ENCODE measurements at regions of chr7 and their contacts with region 1.

Region 1: DNA sequence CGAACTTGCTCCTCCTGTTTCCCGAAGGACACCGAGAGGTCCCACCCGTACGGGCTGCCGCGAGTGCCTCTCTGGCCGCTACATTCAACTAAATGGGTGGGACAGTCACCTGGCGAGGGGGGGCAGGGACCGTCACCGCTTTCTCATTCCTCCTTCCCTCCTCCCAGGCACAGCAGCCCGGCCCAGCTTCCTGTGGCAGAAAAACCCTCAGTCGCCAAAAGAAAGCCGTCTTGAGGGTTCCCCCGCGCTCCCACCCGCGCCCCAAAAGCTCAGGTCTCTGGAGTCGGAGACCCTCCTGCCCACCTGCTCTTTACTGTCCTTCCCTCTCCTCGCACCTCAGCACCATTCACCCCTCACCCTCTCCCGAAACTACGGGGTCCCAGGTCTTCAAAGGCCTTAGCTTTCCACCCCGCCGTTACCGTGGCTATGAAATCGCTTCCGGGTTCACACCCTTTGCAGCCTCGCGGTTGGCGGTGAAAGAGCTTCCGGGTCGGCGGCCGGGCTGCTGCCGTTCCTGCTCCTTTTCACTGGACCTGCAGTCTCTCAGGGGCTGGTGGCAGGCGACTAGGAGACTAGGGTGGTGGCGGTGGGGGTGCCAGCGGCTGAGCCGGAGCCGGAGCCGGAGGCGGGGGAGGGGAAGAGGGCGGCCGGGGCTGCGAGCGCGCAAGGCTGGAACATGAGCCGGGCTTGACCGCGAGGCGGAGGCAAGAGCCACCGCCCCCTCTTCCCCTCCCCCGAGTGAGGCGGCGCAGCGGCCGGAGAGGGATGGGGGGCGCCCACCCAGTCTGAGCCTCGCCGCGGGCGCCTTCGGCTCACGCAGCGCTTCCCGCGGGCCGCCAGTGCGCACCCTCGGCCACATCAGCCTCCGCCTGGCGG is at the starts of genes ANKIB1 and KRIT1:
- DNase-seq: peak; percentile 76 to 90
- H3K4me3 ChIP-seq: peak within 1 kb of the TSS; percentile 84
- H3K27ac ChIP-seq: peak within 1 kb of the TSS; percentile 83
- H3K4me1 ChIP-seq: peaks cover 31% of the 10 kb centered on the region
- H3K27me3 ChIP-seq: no peaks in the 10 kb centered on the region
- CTCF ChIP-seq: no peak
- total RNA-seq, gene ANKIB1: 78.2 and 116 TPM in 2 replicates
- total RNA-seq, gene KRIT1: 46.6 and 52.6 TPM in 2 replicates

Region 2: DNA sequence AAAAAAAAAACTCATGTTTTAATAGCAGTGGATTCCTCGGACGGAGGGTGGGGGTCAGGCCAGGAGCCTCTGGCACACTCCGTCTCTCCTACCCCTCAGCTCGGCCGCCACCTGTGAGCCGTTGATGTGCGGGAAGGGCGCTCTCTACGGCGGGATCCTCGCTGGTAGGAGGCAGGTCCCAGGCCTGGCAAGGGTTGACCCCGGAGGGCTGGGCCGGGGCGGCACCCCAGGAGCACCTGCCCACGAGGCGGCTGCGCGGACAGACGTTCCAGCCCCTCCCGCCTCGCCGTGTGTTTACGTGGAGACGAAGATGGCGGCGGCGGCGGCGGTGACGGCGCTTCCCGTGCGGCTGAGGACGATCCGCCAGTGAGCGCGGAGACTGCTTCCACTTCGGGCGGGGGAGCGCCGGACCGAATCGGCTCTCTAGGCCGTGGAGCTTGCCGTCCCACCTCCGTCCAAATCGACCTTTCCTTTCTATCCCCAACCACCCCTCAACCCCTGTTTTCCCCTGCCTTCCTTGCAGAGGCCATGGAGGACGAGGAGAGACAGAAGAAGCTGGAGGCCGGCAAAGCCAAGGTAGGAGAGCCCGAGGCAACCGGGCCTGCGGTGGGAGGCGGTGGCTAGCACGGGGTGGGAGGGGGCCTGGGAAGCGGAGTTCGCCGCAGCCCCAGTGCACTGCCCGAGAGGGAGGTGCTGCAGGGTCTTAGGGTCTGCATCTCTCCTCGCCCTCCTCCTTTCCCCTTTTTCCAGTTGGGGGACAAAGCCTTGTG is 305.0 kb before region 1 on chr7 and contains the start of gene AKAP9:
- CTCF ChIA-PET with region 1: no interaction called
- POLR2A ChIA-PET with region 1: interaction called, 15 read pairs
- intact Hi-C with region 1: no loop called
- DNase-seq: peak; percentile 81 to 94
- H3K4me3 ChIP-seq: peak within 1 kb of the TSS; percentile 70
- H3K27ac ChIP-seq: peak within 1 kb of the TSS; percentile 78
- H3K4me1 ChIP-seq: peaks cover 30% of the 10 kb centered on the region
- H3K27me3 ChIP-seq: no peaks in the 10 kb centered on the region
- CTCF ChIP-seq: no peak
- total RNA-seq, gene AKAP9: 48.0 and 71.3 TPM in 2 replicates

Region 3: GRCh38 chr7:91995391-91996105 is 250.2 kb before region 1 on chr7:
- CTCF ChIA-PET with region 1: no interaction called
- POLR2A ChIA-PET with region 1: interaction called, 11 read pairs
- intact Hi-C with region 1: no loop called
- DNase-seq: no peak
- H3K4me3 ChIP-seq: no peak overlapping the region
- H3K27ac ChIP-seq: no peak overlapping the region
- H3K4me1 ChIP-seq: no peaks in the 10 kb centered on the region
- H3K27me3 ChIP-seq: no peaks in the 10 kb centered on the region
- CTCF ChIP-seq: no peak

Region 4: DNA sequence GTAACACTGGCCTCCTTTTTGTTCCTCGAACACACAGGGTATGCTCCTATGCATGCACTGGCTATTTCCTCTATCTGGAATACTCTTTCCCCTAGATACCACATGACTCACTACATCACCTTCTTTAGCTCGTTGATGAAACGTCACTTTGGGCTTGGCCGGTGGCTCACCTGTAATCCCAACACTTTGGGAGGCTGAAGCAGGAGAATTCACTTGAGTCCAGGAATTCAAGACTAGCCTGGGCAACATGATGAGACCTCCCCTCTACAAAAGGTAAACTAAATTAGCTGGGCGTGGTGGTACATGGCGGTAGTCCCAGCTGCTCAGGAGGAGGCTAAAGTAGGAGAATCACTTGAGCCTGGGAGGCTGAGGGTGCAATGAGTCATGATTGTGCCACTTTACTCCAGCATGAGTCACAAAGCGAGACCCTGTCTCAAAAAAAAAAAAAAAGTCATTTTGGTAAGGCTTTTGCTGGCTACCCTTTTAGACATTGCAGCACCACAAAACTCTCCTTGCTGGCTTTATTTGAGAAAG is 14.6 kb after region 1 on chr7:
- CTCF ChIA-PET with region 1: no interaction called
- POLR2A ChIA-PET with region 1: no interaction called
- intact Hi-C with region 1: loop called (anchors 1 kb)
- DNase-seq: peak; percentile 66 to 93
- H3K4me3 ChIP-seq: peak overlapping the region; percentile 36; the same call in 1 of the 2 replicates
- H3K27ac ChIP-seq: peak overlapping the region; percentile 97
- H3K4me1 ChIP-seq: peaks cover 28% of the 10 kb centered on the region
- H3K27me3 ChIP-seq: no peaks in the 10 kb centered on the region
- CTCF ChIP-seq: no peak

Region 5: DNA sequence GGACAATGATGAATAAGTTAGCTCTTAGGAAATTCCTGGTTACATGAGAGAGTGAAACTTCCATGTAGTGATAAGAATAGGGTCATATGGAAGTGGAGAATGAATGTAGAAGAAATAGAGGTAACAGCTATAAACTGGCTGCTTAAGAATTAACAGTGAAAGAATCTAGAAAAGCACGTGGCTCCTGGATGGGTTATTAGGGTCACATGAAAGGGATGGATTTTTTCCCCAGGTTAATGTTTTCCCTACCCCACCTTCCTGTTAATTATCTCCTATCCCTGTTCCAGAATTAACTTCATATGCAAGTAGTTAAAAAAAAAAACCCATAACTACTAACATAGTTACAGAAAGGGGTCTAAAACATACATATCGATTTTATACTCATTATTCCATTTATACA is 58.0 kb after region 1 on chr7:
- CTCF ChIA-PET with region 1: no interaction called
- POLR2A ChIA-PET with region 1: no interaction called
- intact Hi-C with region 1: no loop called
- DNase-seq: no peak
- H3K4me3 ChIP-seq: no peak overlapping the region
- H3K27ac ChIP-seq: no peak overlapping the region
- H3K4me1 ChIP-seq: peaks cover 5% of the 10 kb centered on the region
- H3K27me3 ChIP-seq: no peaks in the 10 kb centered on the region
- CTCF ChIP-seq: no peak

Region 6: GRCh38 chr7:92359801-92360200 is 114.1 kb after region 1 on chr7:
- CTCF ChIA-PET with region 1: no interaction called
- POLR2A ChIA-PET with region 1: no interaction called
- intact Hi-C with region 1: loop called (anchors 10 kb)
- DNase-seq: no peak
- H3K4me3 ChIP-seq: no peak overlapping the region
- H3K27ac ChIP-seq: no peak overlapping the region
- H3K4me1 ChIP-seq: no peaks in the 10 kb centered on the region
- H3K27me3 ChIP-seq: no peaks in the 10 kb centered on the region
- CTCF ChIP-seq: no peak

Region 7: DNA sequence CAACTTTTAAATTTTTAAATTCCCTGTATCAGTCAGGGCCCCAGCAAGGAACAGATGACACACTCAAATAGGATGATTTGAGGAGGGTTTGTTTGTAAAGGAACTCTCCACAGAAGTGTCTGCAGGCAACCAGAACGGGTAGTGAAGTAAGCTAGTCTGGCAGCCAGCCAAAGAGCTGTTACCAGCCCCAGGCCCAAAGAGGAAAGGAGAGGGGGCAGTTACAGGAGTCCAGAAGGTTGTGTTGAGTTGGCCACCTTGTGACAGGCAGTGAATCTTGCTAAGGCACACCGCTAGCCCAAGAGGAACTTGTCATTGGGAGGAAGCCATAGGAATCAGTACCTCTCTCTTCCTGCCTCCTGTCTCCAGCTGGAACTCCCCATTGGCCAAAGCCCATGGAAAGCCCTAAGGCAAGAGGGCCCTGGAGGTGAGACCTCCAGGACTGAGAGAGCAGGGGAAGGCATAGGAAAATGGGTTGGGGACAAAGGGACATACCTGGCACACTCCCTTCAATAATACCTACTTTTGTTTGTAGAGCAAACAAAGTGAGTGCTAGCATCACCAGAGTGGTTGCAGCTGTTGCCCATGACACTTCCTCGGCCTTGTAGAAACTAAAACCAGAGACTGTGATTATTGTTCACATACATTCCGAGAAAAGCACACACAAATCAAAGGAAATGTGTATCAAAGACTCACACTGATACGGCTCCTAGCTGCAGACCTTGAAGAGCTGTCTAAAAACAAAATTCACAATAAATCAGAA is 176.1 kb after region 1 on chr7:
- CTCF ChIA-PET with region 1: interaction called, 4 read pairs
- POLR2A ChIA-PET with region 1: interaction called, 3 read pairs
- intact Hi-C with region 1: loop called (anchors 2 kb)
- DNase-seq: no peak
- H3K4me3 ChIP-seq: no peak overlapping the region
- H3K27ac ChIP-seq: no peak overlapping the region
- H3K4me1 ChIP-seq: 0 out of 2 replicates have a peak, but pooled peaks cover 5% of the 10 kb centered on the region
- H3K27me3 ChIP-seq: no peaks in the 10 kb centered on the region
- CTCF ChIP-seq: no peak

Region 8: GRCh38 chr7:92569134-92569533 is 323.4 kb after region 1 on chr7:
- CTCF ChIA-PET with region 1: no interaction called
- POLR2A ChIA-PET with region 1: no interaction called
- intact Hi-C with region 1: no loop called
- DNase-seq: no peak
- H3K4me3 ChIP-seq: no peak overlapping the region
- H3K27ac ChIP-seq: no peak overlapping the region
- H3K4me1 ChIP-seq: no peaks in the 10 kb centered on the region
- H3K27me3 ChIP-seq: no peaks in the 10 kb centered on the region
- CTCF ChIP-seq: no peak

Region 9: GRCh38 chr7:92740700-92741126 is 495.0 kb after region 1 on chr7:
- CTCF ChIA-PET with region 1: no interaction called
- POLR2A ChIA-PET with region 1: no interaction called
- intact Hi-C with region 1: no loop called
- DNase-seq: peak; percentile 75 to 94
- H3K4me3 ChIP-seq: no peak overlapping the region
- H3K27ac ChIP-seq: peak overlapping the region; percentile 41
- H3K4me1 ChIP-seq: peaks cover 27% of the 10 kb centered on the region
- H3K27me3 ChIP-seq: no peaks in the 10 kb centered on the region
- CTCF ChIP-seq: no peak